GM12878 (cell line): ENCODE measurements at regions of chr4 and their contacts with region 1.

Region 1: GRCh38 chr4:169270810-169271691 is at the start of gene SH3RF1:
- DNase-seq: no peak
- ATAC-seq: peak; percentile 79
- H3K4me3 ChIP-seq: peak within 1 kb of the TSS; percentile 80
- H3K27ac ChIP-seq: peak within 1 kb of the TSS; percentile 75
- H3K4me1 ChIP-seq: peaks cover 14% of the 10 kb centered on the region
- H3K27me3 ChIP-seq: no peaks in the 10 kb centered on the region
- CTCF ChIP-seq: peak; percentile 24 to 38 (median 25); a peak in 5 of 6 replicates
- EP300 ChIP-seq: no peak; a peak in 1 of 4 replicates
- POLR2A ChIP-seq: peak; percentile 85
- RAD21 ChIP-seq: peak; percentile 44
- polyA plus RNA-seq, gene SH3RF1: 4.5 to 10.7 TPM

Region 2: GRCh38 chr4:168972596-168972995 is 298.5 kb before region 1 on chr4:
- CTCF ChIA-PET with region 1: no interaction called
- POLR2A ChIA-PET with region 1: no interaction called
- RAD21 ChIA-PET with region 1: no interaction called
- SMC1A ChIA-PET with region 1: no interaction called
- in situ Hi-C with region 1: no loop called
- intact Hi-C with region 1: no loop called
- DNase-seq: no peak
- ATAC-seq: no peak
- H3K4me3 ChIP-seq: no peak overlapping the region
- H3K27ac ChIP-seq: no peak overlapping the region
- H3K4me1 ChIP-seq: no peaks in the 10 kb centered on the region
- H3K27me3 ChIP-seq: no peaks in the 10 kb centered on the region
- CTCF ChIP-seq: no peak
- EP300 ChIP-seq: no peak
- POLR2A ChIP-seq: no peak
- RAD21 ChIP-seq: no peak

Region 3: DNA sequence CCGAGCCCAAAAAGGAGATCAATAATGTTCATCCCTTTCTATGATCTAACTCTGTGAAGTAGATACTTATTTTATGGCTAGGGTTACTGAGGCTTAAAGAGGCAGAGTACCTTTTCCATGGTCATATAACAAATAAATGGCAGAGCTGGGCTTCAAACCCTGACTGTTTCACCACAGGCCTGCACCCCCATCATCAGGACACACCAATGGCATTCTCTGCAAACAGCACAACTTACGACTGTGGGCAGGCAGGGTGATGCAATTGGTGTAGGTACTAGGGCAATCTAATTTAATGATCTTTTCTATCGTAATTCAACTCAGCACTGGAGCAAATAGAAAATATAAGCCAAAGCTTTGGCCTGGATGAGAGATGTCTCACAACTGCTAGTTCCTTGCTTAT is 142.1 kb before region 1 on chr4:
- CTCF ChIA-PET with region 1: no interaction called
- POLR2A ChIA-PET with region 1: no interaction called
- RAD21 ChIA-PET with region 1: no interaction called
- SMC1A ChIA-PET with region 1: interaction called, 12 read pairs
- in situ Hi-C with region 1: no loop called
- intact Hi-C with region 1: no loop called
- DNase-seq: no peak
- ATAC-seq: no peak
- H3K4me3 ChIP-seq: no peak overlapping the region
- H3K27ac ChIP-seq: no peak overlapping the region
- H3K4me1 ChIP-seq: no peaks in the 10 kb centered on the region
- H3K27me3 ChIP-seq: no peaks in the 10 kb centered on the region
- CTCF ChIP-seq: no peak
- EP300 ChIP-seq: no peak
- POLR2A ChIP-seq: no peak
- RAD21 ChIP-seq: no peak

Region 4: DNA sequence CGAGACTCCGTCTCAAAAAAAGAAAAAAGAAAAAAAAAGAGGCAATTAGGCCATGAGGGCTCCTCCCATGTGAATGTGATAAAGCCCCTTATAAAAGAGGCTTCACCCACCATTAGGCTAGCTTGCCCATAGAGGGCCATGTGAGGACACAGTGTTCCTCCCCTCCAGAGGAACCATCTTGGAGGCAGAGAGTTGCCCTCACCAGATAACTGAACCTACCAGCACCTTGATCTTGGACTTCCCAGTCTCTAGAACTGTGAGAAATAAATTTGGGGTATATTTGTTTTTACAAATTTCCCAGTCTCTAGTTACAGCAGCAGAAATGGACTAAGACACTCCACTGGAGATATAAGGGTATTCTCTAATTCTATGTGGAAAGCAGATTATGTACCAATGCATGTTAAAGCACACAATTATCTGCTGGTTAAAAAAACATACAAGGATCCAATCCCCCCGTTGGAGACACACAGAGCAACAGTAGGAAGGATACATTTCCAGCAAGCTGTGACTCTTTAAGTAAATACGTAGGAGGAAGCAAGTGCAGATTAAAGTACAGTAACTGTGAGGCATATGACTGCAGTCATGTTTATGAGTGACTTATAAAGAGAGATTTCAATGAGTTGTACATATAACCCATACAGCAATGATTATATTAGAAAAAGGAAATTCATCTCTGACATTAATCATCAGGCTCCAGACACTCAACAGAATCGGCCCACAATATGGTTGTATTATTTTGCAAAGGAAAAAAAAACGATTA is 21.7 kb before region 1 on chr4:
- CTCF ChIA-PET with region 1: interaction called, 13 read pairs
- POLR2A ChIA-PET with region 1: interaction called, 7 read pairs
- RAD21 ChIA-PET with region 1: interaction called, 64 read pairs
- SMC1A ChIA-PET with region 1: interaction called, 102 read pairs
- in situ Hi-C with region 1: no loop called
- intact Hi-C with region 1: no loop called
- DNase-seq: no peak
- ATAC-seq: peak; percentile 72
- H3K4me3 ChIP-seq: no peak overlapping the region
- H3K27ac ChIP-seq: no peak overlapping the region
- H3K4me1 ChIP-seq: no peaks in the 10 kb centered on the region; the same call in 1 of the 2 replicates
- H3K27me3 ChIP-seq: no peaks in the 10 kb centered on the region
- CTCF ChIP-seq: no peak
- EP300 ChIP-seq: no peak
- POLR2A ChIP-seq: no peak
- RAD21 ChIP-seq: no peak

Region 5: DNA sequence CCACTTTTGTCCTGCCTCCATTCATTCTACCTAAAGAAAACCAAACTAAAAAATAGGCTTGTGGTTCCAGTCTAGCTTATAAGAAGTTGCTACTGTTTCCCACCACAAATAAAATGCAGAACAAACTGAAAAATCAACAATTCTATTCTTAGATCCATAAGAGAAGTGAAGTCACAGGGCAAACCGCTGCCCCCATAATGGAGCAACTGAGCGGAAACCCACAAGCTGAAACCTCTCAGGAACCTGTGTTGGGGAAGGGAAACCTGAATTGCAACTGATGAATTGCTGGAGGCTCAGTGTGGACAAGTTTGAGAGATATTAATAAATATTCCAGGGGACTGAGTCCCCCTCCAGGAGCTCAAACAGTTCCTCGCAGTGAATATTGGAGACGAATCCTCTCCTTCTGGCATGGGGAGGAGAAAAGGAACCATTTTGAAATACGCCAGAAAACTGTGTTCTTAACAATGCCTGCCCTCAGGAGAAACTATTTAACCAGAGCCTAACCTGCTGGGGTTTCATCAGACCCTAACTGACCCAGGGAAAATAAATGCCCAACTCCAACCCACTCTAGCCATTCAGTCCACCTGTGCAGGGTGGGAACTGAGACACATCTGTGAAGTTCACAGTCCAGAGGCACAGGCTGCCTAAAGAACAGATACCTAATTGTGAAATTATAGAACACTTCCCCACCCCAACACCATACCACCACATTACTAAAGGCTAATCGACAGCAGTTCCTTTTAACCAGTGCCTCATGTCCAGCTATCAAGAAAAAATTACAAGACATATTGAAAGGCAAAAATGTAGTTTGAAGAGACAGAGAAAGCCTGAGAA is 22.5 kb after region 1 on chr4:
- CTCF ChIA-PET with region 1: interaction called, 9 read pairs
- POLR2A ChIA-PET with region 1: interaction called, 5 read pairs
- RAD21 ChIA-PET with region 1: interaction called, 15 read pairs
- SMC1A ChIA-PET with region 1: interaction called, 17 read pairs
- in situ Hi-C with region 1: no loop called
- intact Hi-C with region 1: loop called (anchors 1 kb)
- DNase-seq: peak; percentile 90
- ATAC-seq: peak; percentile 92
- H3K4me3 ChIP-seq: peak overlapping the region; percentile 26; the same call in 1 of the 2 replicates
- H3K27ac ChIP-seq: peak overlapping the region; percentile 85
- H3K4me1 ChIP-seq: peaks cover 33% of the 10 kb centered on the region
- H3K27me3 ChIP-seq: no peaks in the 10 kb centered on the region
- CTCF ChIP-seq: no peak
- EP300 ChIP-seq: peak; percentile 72 to 83; a peak in 2 of 4 replicates
- POLR2A ChIP-seq: no peak
- RAD21 ChIP-seq: peak; percentile 30; the same call in 1 of the 2 replicates

Region 6: DNA sequence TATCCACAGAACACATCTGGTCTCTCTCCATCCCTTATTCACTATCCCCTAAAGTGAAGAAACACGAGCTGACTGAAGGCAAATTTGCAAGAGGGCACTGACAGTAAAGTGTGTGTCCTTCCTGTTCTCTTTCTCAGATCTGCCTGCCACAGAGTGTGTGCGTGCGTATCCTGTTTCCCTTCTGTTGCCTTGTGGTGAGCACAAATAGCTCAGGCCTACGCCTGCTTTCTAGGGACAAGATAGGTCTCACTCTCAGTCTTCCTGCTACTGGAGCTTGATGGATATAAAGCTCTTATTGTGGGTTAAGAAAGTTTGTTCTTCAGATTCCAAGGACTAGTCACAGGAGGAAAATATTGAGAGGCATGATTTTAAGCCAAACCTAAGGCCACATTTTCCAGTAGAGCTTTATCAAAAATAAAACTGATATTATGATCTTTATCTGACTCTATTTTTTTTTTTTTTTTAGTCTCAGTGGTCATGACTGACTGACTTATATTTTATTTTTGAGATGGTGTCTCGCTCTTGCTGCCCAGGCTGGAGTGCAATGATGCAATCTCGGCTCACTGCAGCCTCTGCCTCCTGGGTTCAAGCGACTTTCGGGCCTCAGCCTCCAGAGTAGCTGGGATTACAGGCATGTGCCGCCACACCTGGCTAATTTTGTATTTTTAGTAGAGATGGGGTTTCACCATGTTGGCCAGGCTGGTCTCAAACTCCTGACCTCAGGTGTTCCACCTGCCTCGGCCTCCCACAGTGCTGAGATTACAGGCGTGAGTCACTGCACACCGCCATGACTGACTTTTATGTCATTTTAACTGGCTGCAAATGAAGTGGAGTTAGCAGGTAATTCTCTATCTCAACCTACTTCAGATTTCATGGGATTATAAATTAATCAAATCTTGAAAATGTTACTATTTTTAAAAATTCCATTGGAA is 140.1 kb after region 1 on chr4:
- CTCF ChIA-PET with region 1: interaction called, 4 read pairs
- POLR2A ChIA-PET with region 1: interaction called, 6 read pairs
- RAD21 ChIA-PET with region 1: interaction called, 12 read pairs
- SMC1A ChIA-PET with region 1: interaction called, 10 read pairs
- in situ Hi-C with region 1: no loop called
- intact Hi-C with region 1: loop called (anchors 2 kb)
- DNase-seq: peak; percentile 93
- ATAC-seq: peak; percentile 97
- H3K4me3 ChIP-seq: 0 out of 2 replicates have a peak overlapping the region, but pooled peaks have one; percentile 46
- H3K27ac ChIP-seq: peak overlapping the region; percentile 63
- H3K4me1 ChIP-seq: peaks cover 22% of the 10 kb centered on the region
- H3K27me3 ChIP-seq: no peaks in the 10 kb centered on the region
- CTCF ChIP-seq: no peak
- EP300 ChIP-seq: peak; percentile 87 to 92
- POLR2A ChIP-seq: peak; percentile 61
- RAD21 ChIP-seq: peak; percentile 32; the same call in 1 of the 2 replicates

Region 7: GRCh38 chr4:169557061-169557636 is 286.1 kb after region 1 on chr4:
- CTCF ChIA-PET with region 1: no interaction called
- POLR2A ChIA-PET with region 1: no interaction called
- RAD21 ChIA-PET with region 1: no interaction called
- SMC1A ChIA-PET with region 1: no interaction called
- in situ Hi-C with region 1: no loop called
- intact Hi-C with region 1: no loop called
- DNase-seq: no peak
- ATAC-seq: no peak
- H3K4me3 ChIP-seq: no peak overlapping the region
- H3K27ac ChIP-seq: no peak overlapping the region
- H3K4me1 ChIP-seq: no peaks in the 10 kb centered on the region
- H3K27me3 ChIP-seq: no peaks in the 10 kb centered on the region
- CTCF ChIP-seq: no peak
- EP300 ChIP-seq: no peak
- POLR2A ChIP-seq: no peak
- RAD21 ChIP-seq: no peak

Region 8: DNA sequence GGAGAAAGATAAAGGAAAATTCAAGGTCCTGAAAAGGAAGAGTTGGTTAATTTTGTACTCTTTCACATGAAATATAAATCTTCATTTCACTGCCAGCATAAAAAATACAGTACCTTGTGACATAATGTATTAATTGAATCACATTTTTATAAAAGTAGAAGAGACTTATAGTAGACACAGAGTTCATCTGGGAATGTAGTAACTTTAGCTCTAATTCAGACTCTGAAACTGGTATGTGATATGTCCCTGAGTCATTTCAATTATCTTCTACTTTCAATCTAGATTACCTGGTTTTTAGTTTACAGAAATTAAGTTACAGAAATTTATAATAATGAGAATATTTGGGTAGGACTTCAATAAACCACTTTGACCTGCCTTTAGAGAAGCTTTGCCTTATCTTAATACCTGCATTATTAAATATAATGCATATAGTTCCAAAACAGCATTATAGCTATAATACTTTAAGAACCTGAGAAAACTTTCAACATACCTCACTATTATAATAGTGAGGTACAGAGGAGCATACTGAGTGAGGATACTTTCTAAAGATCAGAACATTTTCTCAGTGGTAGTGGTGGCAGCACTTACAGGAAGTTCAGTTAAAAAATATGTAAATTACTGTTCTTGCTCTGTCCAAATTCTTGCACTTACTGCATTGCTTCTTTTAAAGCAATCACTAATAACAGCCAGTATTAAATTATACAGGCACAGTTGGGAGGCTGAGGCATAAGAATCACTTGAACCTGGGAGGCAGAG is 330.1 kb after region 1 on chr4:
- CTCF ChIA-PET with region 1: no interaction called
- POLR2A ChIA-PET with region 1: no interaction called
- RAD21 ChIA-PET with region 1: no interaction called
- SMC1A ChIA-PET with region 1: no interaction called
- in situ Hi-C with region 1: no loop called
- intact Hi-C with region 1: no loop called
- DNase-seq: no peak
- ATAC-seq: 0 out of 3 replicates have a peak, but pooled peaks have one; percentile 11
- H3K4me3 ChIP-seq: no peak overlapping the region
- H3K27ac ChIP-seq: no peak overlapping the region
- H3K4me1 ChIP-seq: 0 out of 2 replicates have a peak, but pooled peaks cover 8% of the 10 kb centered on the region
- H3K27me3 ChIP-seq: no peaks in the 10 kb centered on the region
- CTCF ChIP-seq: no peak
- EP300 ChIP-seq: no peak
- POLR2A ChIP-seq: no peak
- RAD21 ChIP-seq: no peak

Region 9: DNA sequence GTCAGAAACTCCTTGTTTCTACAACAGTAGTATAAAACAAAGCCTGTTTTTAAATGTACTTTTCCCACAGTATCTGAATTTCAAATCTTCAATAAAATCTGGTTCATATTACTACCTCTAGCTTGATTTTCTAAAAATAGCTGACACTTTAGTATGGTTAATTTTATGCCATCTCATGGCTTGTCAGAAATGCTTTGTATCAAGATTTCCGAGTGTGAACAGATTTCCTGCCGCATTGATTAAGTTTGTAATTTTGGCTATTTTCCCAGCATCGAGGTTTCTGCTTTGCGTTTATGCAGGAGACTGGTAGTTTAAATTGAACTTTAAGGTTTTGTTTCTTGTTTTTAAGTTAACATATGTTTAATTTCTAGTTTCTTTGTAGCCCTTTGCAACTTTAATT is 393.6 kb after region 1 on chr4:
- CTCF ChIA-PET with region 1: no interaction called
- POLR2A ChIA-PET with region 1: no interaction called
- RAD21 ChIA-PET with region 1: no interaction called
- SMC1A ChIA-PET with region 1: no interaction called
- in situ Hi-C with region 1: no loop called
- intact Hi-C with region 1: no loop called
- DNase-seq: no peak
- ATAC-seq: no peak
- H3K4me3 ChIP-seq: no peak overlapping the region
- H3K27ac ChIP-seq: no peak overlapping the region
- H3K4me1 ChIP-seq: no peaks in the 10 kb centered on the region; the same call in 1 of the 2 replicates
- H3K27me3 ChIP-seq: no peaks in the 10 kb centered on the region
- CTCF ChIP-seq: no peak
- EP300 ChIP-seq: no peak
- POLR2A ChIP-seq: no peak
- RAD21 ChIP-seq: no peak